ENCODE measurements at regions of chr1 and their contacts with region 1.

Region 1: GRCh38 chr1:25549273-25550154 is 6.1 kb downstream of the LDLRAP1 start:
- DNase-seq: peak; percentile 93
- ATAC-seq: peak; percentile 93
- H3K4me3 Mint-ChIP-seq: peak overlapping the region; percentile 5
- H3K27ac Mint-ChIP-seq: peak overlapping the region; percentile 71
- H3K4me1 Mint-ChIP-seq: peaks cover 59% of the 10 kb centered on the region
- H3K27me3 Mint-ChIP-seq: peaks cover 17% of the 10 kb centered on the region

Region 2: GRCh38 chr1:25469177-25469576 is 80.3 kb before region 1 on chr1:
- CTCF ChIA-PET with region 1: no interaction called
- DNase-seq: no peak
- ATAC-seq: no peak
- H3K4me3 Mint-ChIP-seq: no peak overlapping the region
- H3K27ac Mint-ChIP-seq: no peak overlapping the region
- H3K4me1 Mint-ChIP-seq: peaks cover 38% of the 10 kb centered on the region
- H3K27me3 Mint-ChIP-seq: no peaks in the 10 kb centered on the region

Region 3: DNA sequence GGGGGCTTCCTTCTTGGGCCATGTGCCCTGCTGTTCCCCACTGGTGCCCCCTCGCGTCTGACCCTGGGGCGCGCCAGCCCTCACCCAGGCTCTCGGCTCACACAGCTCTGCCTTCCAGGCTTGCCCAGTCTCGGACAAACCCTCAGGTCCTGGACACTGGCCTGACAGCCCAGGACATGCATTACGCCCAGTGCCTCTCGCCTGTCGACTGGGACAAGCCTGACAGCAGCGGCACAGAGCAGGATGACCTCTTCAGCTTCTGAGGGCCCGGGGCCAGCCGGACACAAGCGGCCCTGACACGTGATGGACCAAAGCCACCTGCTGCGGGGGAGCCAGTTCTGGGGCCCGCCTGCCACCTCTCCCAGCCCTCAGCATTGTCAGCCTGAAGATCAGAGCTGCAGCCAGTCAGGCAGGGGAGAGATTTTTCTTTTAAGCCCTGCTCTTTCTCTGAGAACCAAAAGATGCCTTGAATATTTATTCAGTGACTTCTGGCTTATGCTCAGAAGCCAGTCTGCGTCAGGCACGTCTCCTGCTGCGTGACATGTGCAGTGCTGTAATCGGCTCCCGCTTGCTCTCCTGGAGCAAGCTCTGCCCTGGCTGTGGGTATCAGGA is 17.3 kb after region 1 on chr1:
- CTCF ChIA-PET with region 1: interaction called, 14 read pairs
- DNase-seq: no peak
- ATAC-seq: no peak
- H3K4me3 Mint-ChIP-seq: no peak overlapping the region
- H3K27ac Mint-ChIP-seq: no peak overlapping the region
- H3K4me1 Mint-ChIP-seq: peaks cover 49% of the 10 kb centered on the region
- H3K27me3 Mint-ChIP-seq: no peaks in the 10 kb centered on the region

Measured in activated CD8-positive, alpha-beta memory T cell treated with anti-CD3 and anti-CD28 coated beads, Interleukin-2, amount 10 ng/mL, durations not matched to agents 7 days and 5 days (primary cell).